ENCODE measurements at regions of chr2 and their contacts with region 1.

Region 1: GRCh38 chr2:148644883-148645538 is 460 bp downstream of the EPC2 start:
- DNase-seq: peak; percentile 86 to 98 (median 94)
- ATAC-seq: peak; percentile 73
- H3K4me3 ChIP-seq: peak overlapping the region; percentile 93
- H3K4me3 Mint-ChIP-seq: peak overlapping the region; percentile 92
- H3K27ac ChIP-seq: peak overlapping the region; percentile 97 to 98
- H3K27ac Mint-ChIP-seq: peak overlapping the region; percentile 93
- H3K4me1 ChIP-seq: peaks cover 20% of the 10 kb centered on the region
- H3K4me1 Mint-ChIP-seq: peaks cover 40% of the 10 kb centered on the region
- H3K27me3 ChIP-seq: no peaks in the 10 kb centered on the region
- H3K27me3 Mint-ChIP-seq: no peaks in the 10 kb centered on the region
- CTCF ChIP-seq: no peak

Region 2: DNA sequence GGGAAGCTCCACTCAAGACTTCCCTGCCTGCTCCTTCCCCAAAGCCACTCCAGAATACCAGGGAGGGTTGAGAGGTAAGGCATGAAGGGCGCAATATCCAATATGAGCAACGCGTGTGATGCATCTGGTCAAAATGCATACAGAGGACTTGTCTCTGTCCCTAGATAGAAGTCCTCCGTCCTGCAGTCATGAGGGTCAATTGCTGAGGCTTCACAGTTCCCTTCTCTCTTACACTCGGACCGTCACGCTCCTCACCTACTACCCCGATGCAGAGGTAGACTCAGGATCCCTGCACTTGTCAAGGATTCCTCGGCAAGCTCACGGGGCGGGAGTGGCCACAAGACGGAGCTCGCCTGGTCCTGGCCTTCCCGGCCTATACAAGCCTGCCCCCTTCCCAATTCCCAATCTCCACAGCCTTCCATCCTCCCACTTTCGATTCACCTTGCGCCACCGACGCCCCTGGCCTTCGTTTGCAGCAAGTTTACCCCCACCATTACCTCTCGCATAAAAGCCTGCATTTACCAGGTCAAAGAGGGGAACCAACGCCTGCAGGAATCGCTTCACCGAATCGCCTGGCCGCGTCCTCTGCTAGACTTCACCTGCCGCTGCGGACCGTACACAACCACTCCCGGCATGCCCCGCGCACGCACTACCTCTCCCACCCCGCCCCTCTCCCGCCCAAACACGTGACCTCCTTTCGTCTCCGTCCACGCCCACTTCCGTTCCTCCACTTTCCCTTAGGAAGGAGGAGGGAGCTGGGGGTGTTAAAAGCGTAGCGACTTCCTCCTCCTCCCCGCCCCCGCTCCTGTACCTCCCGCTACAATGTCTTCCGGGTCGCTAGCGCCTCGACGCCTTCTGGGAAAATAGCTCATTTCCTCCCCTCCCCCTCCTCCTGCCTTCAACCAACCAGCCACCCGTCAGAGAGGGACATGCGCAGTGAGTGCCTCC is 624.6 kb before region 1 on chr2 and contains the start of gene ORC4:
- CTCF ChIA-PET with region 1: no interaction called
- POLR2A ChIA-PET with region 1: interaction called, 106 read pairs
- intact Hi-C with region 1: loop called (anchors 1 to 2 kb)
- DNase-seq: peak; percentile 90 to 100 (median 97)
- ATAC-seq: peak; percentile 89
- H3K4me3 ChIP-seq: peak within 1 kb of the TSS; percentile 90
- H3K4me3 Mint-ChIP-seq: peak within 1 kb of the TSS; percentile 93
- H3K27ac ChIP-seq: peak within 1 kb of the TSS; percentile 86 to 94
- H3K27ac Mint-ChIP-seq: peak within 1 kb of the TSS; percentile 87
- H3K4me1 ChIP-seq: peaks cover 17% of the 10 kb centered on the region
- H3K4me1 Mint-ChIP-seq: peaks cover 82% of the 10 kb centered on the region
- H3K27me3 ChIP-seq: no peaks in the 10 kb centered on the region
- H3K27me3 Mint-ChIP-seq: no peaks in the 10 kb centered on the region
- CTCF ChIP-seq: no peak
- total RNA-seq, gene ORC4: 29.4 to 33.9 TPM

Region 3: GRCh38 chr2:148540022-148540421 is 105.0 kb before region 1 on chr2:
- CTCF ChIA-PET with region 1: no interaction called
- POLR2A ChIA-PET with region 1: interaction called, 15 read pairs
- intact Hi-C with region 1: no loop called
- DNase-seq: peak in 5 of 14 experiments; percentile 26 to 56 (median 41)
- ATAC-seq: peak; percentile 78
- H3K4me3 ChIP-seq: no peak overlapping the region
- H3K4me3 Mint-ChIP-seq: peak overlapping the region; percentile 21
- H3K27ac ChIP-seq: no peak overlapping the region
- H3K27ac Mint-ChIP-seq: peak overlapping the region; percentile 31
- H3K4me1 ChIP-seq: peaks cover 40% of the 10 kb centered on the region
- H3K4me1 Mint-ChIP-seq: peaks cover 48% of the 10 kb centered on the region
- H3K27me3 ChIP-seq: no peaks in the 10 kb centered on the region
- H3K27me3 Mint-ChIP-seq: no peaks in the 10 kb centered on the region
- CTCF ChIP-seq: no peak

Region 4: DNA sequence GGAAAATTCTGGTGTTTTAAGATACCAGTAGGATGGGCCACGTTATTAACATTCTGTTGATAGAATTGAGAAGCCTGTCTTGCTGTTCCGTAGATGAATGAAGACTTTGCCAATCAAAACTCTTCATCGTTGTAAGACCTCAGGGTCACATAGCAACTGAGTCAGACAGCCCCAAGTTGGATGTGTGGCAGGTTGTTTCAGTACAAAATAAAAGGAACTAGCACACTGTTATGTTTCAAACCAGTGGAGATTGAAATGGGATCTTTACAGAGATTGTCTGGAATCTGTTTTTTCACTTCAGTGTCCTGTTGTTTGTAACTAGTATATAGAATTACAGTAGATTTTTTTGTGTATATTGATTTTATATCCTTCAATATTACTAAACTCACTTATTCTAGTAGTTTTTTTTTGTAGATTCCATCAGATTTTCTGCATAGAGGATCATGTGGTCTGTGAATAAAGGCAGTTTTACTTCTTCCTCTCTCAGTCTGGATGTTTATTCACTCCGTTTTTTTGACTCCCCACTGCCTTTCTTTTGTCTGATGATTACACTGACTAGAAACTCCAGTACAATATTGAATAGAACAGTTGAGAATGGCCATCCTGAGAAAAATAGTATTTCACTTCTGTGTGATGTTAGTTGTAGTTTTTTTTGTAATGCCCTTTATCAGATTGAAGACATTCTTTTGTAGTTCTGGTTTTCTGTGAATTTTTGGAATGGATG is 22.3 kb after region 1 on chr2:
- CTCF ChIA-PET with region 1: interaction called, 3 read pairs
- POLR2A ChIA-PET with region 1: interaction called, 11 read pairs
- intact Hi-C with region 1: loop called in 1 of 2 experiments (anchors 2 kb)
- DNase-seq: no peak
- ATAC-seq: no peak
- H3K4me3 ChIP-seq: no peak overlapping the region
- H3K4me3 Mint-ChIP-seq: peak overlapping the region; percentile 75
- H3K27ac ChIP-seq: no peak overlapping the region
- H3K27ac Mint-ChIP-seq: peak overlapping the region; percentile 43
- H3K4me1 ChIP-seq: peaks cover 23% of the 10 kb centered on the region
- H3K4me1 Mint-ChIP-seq: peaks cover 83% of the 10 kb centered on the region
- H3K27me3 ChIP-seq: no peaks in the 10 kb centered on the region
- H3K27me3 Mint-ChIP-seq: no peaks in the 10 kb centered on the region
- CTCF ChIP-seq: no peak

Region 5: GRCh38 chr2:148702475-148702874 is 57.5 kb after region 1 on chr2:
- CTCF ChIA-PET with region 1: no interaction called
- POLR2A ChIA-PET with region 1: interaction called, 5 read pairs
- intact Hi-C with region 1: loop called (anchors 5 to 10 kb)
- DNase-seq: no peak
- ATAC-seq: no peak
- H3K4me3 ChIP-seq: no peak overlapping the region
- H3K4me3 Mint-ChIP-seq: no peak overlapping the region
- H3K27ac ChIP-seq: no peak overlapping the region
- H3K27ac Mint-ChIP-seq: no peak overlapping the region
- H3K4me1 ChIP-seq: peaks cover 3% of the 10 kb centered on the region
- H3K4me1 Mint-ChIP-seq: peaks cover 40% of the 10 kb centered on the region
- H3K27me3 ChIP-seq: no peaks in the 10 kb centered on the region
- H3K27me3 Mint-ChIP-seq: no peaks in the 10 kb centered on the region
- CTCF ChIP-seq: no peak

Region 6: DNA sequence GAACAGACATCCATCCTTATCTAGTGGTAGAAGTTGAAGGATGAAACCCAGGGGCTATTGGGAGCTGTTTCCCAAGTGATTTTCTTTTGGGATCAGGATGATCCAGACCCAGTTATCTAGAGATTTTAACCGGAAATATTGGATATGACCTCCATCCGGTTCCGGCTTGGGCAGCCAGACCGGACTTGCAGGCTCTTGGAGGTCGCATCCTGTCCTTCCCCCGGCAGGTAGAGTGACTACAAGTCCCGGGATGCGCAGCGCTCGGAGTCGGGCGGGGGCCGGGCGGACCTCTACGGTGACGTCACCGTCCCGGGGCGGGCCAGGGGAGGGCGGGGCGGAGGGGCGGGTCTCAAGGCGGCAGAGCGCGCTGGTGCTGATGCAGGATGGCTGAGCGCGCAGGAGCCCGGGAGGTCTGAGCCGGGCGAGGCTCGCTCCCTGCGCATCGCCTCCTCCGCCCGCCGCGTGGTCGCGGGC is 229.9 kb after region 1 on chr2 and contains the start of gene KIF5C:
- CTCF ChIA-PET with region 1: no interaction called
- POLR2A ChIA-PET with region 1: interaction called, 6 read pairs
- intact Hi-C with region 1: loop called (anchors 5 kb)
- DNase-seq: peak; percentile 78 to 95 (median 88)
- ATAC-seq: peak; percentile 90
- H3K4me3 ChIP-seq: peak within 1 kb of the TSS; percentile 70
- H3K4me3 Mint-ChIP-seq: peak within 1 kb of the TSS; percentile 92
- H3K27ac ChIP-seq: no peak within 1 kb of the TSS
- H3K27ac Mint-ChIP-seq: no peak within 1 kb of the TSS
- H3K4me1 ChIP-seq: peaks cover 24% of the 10 kb centered on the region
- H3K4me1 Mint-ChIP-seq: peaks cover 24% of the 10 kb centered on the region
- H3K27me3 ChIP-seq: peaks cover 2 to 13% of the 10 kb centered on the region in 2 experiments
- H3K27me3 Mint-ChIP-seq: peaks cover 52% of the 10 kb centered on the region
- CTCF ChIP-seq: no peak
- total RNA-seq, gene KIF5C: 7.3 to 8.1 TPM